A549 (cell line): ENCODE measurements at regions of chr5 and their contacts with region 1.

Region 1: DNA sequence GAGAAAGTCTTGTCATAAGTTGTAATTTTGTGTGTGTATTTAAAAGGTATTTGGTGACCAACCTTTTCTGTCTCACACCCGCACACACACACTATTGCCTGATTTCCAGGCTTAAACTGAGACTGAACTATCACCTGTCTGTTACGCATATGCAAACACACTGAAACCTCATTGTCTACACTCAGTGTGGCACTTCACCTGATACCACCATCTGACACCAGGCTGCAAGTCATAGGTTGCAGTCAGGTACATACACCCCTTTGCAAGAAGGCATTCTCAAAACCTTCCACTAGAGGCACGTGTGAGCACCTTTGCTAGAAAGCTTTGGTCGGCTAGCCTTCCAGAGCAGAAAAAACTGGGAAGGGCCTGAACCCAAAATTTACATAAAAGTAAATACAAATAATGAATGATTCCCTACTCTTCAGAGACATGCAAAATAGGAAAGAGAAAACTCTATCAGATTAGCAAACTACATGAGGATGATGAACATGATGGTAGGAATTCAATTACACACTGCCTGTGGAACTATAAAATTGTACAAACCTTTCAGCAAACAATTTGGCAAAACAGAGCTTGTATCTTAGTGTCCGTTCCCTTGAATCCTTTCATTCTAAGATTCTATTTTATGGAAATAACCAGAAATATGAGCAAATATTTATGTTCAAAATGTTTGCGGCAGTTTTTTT is 5.9 kb upstream of the FOXD1 start:
- DNase-seq: peak in 1 of 2 experiments; percentile 83
- ATAC-seq: peak; percentile 75 to 79
- H3K4me3 ChIP-seq: no peak overlapping the region
- H3K27ac ChIP-seq: no peak overlapping the region
- H3K4me1 ChIP-seq: 0 out of 3 replicates have a peak, but pooled peaks cover 4% of the 10 kb centered on the region
- CTCF ChIP-seq: peak; percentile 59
- EP300 ChIP-seq: no peak
- POLR2A ChIP-seq: no peak
- RAD21 ChIP-seq: peak; percentile 25 to 43; a peak in 3 of 5 replicates

Region 2: DNA sequence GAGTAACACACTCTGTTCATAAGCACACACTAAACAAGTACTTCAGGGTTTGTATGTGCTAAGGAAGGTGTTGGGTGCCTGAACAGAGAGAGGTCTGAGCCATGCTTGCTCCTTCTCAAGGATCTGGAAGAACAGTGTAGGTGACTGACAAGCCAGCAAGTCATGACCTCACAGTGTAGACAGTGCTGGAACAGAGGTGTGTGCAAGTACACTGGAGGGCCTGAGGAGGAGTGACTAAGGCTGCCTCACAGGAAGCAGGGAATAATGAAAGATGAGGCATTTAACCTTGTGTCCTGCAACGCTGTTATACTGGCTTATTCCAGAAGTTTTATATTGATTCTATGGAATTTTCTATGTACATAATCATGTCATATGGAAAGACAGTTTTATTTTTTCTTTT is 197.6 kb before region 1 on chr5:
- CTCF ChIA-PET with region 1: no interaction called
- POLR2A ChIA-PET with region 1: no interaction called
- DNase-seq: no peak
- ATAC-seq: no peak
- H3K4me3 ChIP-seq: no peak overlapping the region
- H3K27ac ChIP-seq: no peak overlapping the region
- H3K4me1 ChIP-seq: no peaks in the 10 kb centered on the region
- CTCF ChIP-seq: no peak
- EP300 ChIP-seq: no peak
- POLR2A ChIP-seq: no peak
- RAD21 ChIP-seq: no peak

Region 3: GRCh38 chr5:73442996-73443627 is 11.4 kb before region 1 on chr5:
- CTCF ChIA-PET with region 1: interaction called, 34 read pairs
- POLR2A ChIA-PET with region 1: interaction called, 8 read pairs
- DNase-seq: no peak
- ATAC-seq: no peak
- H3K4me3 ChIP-seq: no peak overlapping the region
- H3K27ac ChIP-seq: no peak overlapping the region
- H3K4me1 ChIP-seq: peaks cover 17% of the 10 kb centered on the region
- CTCF ChIP-seq: no peak
- EP300 ChIP-seq: no peak
- POLR2A ChIP-seq: no peak
- RAD21 ChIP-seq: no peak

Region 4: DNA sequence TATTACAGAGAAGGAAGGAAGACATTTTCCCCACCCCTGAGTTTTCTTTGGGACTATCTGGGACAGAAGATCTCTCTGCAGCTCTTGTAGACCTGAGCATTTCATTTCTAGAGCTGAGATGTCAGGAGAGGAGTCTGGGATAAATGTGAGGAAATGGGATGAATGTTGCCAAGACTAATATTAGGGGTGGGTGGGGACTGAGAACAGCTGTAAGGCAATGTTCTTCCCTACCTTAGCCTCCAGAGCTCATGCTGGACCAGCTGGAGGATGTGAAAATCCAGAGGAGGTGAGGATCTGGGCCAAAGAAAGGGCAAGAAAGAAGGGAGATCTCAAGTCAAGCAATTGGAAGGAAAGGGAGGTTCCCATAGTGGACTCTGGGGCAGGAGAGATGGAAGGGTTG is 17.2 kb after region 1 on chr5:
- CTCF ChIA-PET with region 1: interaction called, 22 read pairs
- POLR2A ChIA-PET with region 1: no interaction called
- DNase-seq: no peak
- ATAC-seq: no peak
- H3K4me3 ChIP-seq: no peak overlapping the region
- H3K27ac ChIP-seq: no peak overlapping the region
- H3K4me1 ChIP-seq: no peaks in the 10 kb centered on the region
- CTCF ChIP-seq: no peak
- EP300 ChIP-seq: no peak
- POLR2A ChIP-seq: no peak
- RAD21 ChIP-seq: no peak

Region 5: GRCh38 chr5:73507062-73507461 is 52.6 kb after region 1 on chr5:
- CTCF ChIA-PET with region 1: interaction called, 10 read pairs
- POLR2A ChIA-PET with region 1: no interaction called
- DNase-seq: no peak
- ATAC-seq: peak in 1 of 2 experiments; percentile 43; a peak in 3 of 6 replicates
- H3K4me3 ChIP-seq: no peak overlapping the region
- H3K27ac ChIP-seq: no peak overlapping the region
- H3K4me1 ChIP-seq: no peaks in the 10 kb centered on the region
- CTCF ChIP-seq: no peak
- EP300 ChIP-seq: no peak
- POLR2A ChIP-seq: no peak
- RAD21 ChIP-seq: no peak

Region 6: DNA sequence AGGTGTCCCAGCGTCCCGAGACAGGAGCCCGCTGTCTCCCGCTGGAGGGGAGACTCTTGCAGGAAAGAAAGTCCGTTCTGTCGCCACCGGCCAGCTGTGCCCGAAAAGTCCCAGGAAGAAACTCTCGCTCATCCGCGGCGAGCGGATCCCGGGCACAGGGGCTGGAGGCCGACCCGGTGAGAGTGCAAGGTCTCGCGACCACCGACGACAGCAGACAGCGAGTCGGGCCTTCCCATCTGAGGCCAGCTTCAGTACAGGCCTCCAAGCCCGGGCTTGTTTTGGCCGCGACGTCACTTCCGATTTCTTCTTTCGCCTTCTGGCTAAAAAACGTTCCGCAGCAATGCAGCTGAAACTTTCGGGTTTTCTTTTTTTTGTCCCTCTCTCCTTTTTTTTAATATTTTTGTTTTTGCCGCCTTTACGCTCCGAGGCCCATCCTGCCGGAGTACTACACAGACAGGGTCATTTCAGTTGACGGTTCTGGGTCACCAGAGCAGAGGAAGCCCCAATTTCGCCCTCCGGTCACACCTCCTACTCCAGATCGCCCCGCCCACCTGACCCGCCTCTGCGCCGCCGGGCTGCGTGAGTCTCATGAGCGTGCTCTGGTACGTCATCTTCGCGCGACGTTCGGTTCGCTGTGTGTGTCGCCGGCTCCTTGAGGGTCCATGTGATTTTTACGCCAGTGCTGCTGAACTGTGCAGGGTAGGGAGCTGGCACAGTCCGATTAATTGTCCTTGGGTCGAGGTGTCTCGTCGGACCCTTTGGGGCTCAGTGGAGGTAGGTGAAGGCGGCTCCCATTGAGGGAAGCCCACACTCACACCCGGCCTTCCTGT is 110.9 kb after region 1 on chr5 and contains the starts of genes ANKRA2 and UTP15:
- CTCF ChIA-PET with region 1: no interaction called
- POLR2A ChIA-PET with region 1: no interaction called
- DNase-seq: peak; percentile 75 to 99
- ATAC-seq: peak; percentile 93 to 95
- H3K4me3 ChIP-seq: peak within 1 kb of the TSS; percentile 91
- H3K27ac ChIP-seq: peak within 1 kb of the TSS; percentile 79 to 89
- H3K4me1 ChIP-seq: peaks cover 18% of the 10 kb centered on the region; the same call in 2 of the 3 replicates
- CTCF ChIP-seq: no peak
- EP300 ChIP-seq: no peak
- POLR2A ChIP-seq: peak; percentile 73
- RAD21 ChIP-seq: no peak
- polyA plus RNA-seq, gene ANKRA2: 26.8 and 38.3 TPM in 2 replicates
- polyA plus RNA-seq, gene UTP15: 25.9 and 44.0 TPM in 2 replicates